Mammary epithelial cell (primary cell): ENCODE measurements at regions of chr3 and their contacts with region 1.

Region 1: GRCh38 chr3:135965506-135966270 is at the start of gene PPP2R3A:
- DNase-seq: peak; percentile 86
- H3K4me3 ChIP-seq: peak within 1 kb of the TSS; percentile 71 to 91 (median 80)
- H3K27ac ChIP-seq: peak within 1 kb of the TSS; percentile 76
- H3K4me1 ChIP-seq: peaks cover 32% of the 10 kb centered on the region
- H3K27me3 ChIP-seq: no peaks in the 10 kb centered on the region
- CTCF ChIP-seq: no peak
- total RNA-seq, gene PPP2R3A: 16.4 to 20.0 TPM

Region 2: GRCh38 chr3:135918580-135918962 is 47.1 kb before region 1 on chr3:
- CTCF ChIA-PET with region 1: no interaction called
- dilution Hi-C with region 1: loop called (anchors 5 kb)
- in situ Hi-C with region 1: no loop called
- intact Hi-C with region 1: no loop called
- DNase-seq: peak; percentile 31
- H3K4me3 ChIP-seq: no peak overlapping the region
- H3K27ac ChIP-seq: no peak overlapping the region
- H3K4me1 ChIP-seq: peaks cover 22% of the 10 kb centered on the region
- H3K27me3 ChIP-seq: no peaks in the 10 kb centered on the region
- CTCF ChIP-seq: peak; percentile 52 to 55

Region 3: DNA sequence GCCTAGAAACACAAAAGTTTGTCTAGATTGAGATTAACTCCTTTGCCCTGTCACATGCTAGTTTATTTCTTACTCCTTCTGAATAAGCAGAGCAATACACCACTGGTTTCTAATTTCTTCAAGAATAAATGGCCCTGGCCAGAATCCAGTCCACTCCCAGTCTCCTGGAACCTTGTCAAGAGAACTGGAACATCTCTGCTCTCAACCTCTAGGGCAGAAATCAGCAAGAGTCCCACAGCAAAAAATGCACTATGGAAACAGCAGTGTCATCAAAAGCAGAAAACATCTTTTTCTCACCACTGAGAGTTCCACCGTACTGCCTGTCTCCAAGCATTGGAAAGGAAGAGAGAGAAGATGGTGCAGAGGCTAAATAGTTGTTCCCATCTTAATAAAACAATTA is 36.0 kb before region 1 on chr3:
- CTCF ChIA-PET with region 1: no interaction called
- dilution Hi-C with region 1: loop called (anchors 5 kb)
- in situ Hi-C with region 1: no loop called
- intact Hi-C with region 1: loop called (anchors 5 kb)
- DNase-seq: peak; percentile 50
- H3K4me3 ChIP-seq: no peak overlapping the region
- H3K27ac ChIP-seq: no peak overlapping the region
- H3K4me1 ChIP-seq: peaks cover 22% of the 10 kb centered on the region
- H3K27me3 ChIP-seq: no peaks in the 10 kb centered on the region
- CTCF ChIP-seq: peak in 1 of 2 donors; percentile 15

Region 4: GRCh38 chr3:135992072-135992471 is 26.4 kb after region 1 on chr3:
- CTCF ChIA-PET with region 1: no interaction called
- dilution Hi-C with region 1: no loop called
- in situ Hi-C with region 1: no loop called
- intact Hi-C with region 1: loop called (anchors 2 kb)
- DNase-seq: peak; percentile 80
- H3K4me3 ChIP-seq: no peak overlapping the region
- H3K27ac ChIP-seq: peak overlapping the region; percentile 72
- H3K4me1 ChIP-seq: peaks cover 26% of the 10 kb centered on the region
- H3K27me3 ChIP-seq: no peaks in the 10 kb centered on the region
- CTCF ChIP-seq: no peak

Region 5: DNA sequence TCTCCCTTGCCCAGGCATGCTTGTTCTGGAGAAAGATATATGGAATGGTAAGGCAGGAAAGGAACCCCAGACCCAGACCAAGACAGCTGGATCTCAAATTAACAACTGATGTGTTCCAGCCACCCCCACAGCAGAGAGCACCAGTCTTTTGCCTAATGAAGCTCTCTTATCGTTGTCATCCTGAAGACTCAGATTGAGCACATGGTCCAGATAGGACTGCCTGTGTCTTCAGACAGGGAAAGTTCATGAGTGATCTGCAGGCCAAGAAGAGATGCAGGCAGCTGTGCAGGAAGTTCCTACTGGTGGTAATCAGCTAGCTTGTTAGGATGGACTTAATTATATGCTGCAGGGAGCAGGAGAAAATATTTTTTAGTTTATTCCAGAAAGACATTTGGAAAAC is 53.2 kb after region 1 on chr3:
- CTCF ChIA-PET with region 1: no interaction called
- dilution Hi-C with region 1: loop called (anchors 5 kb)
- in situ Hi-C with region 1: no loop called
- intact Hi-C with region 1: loop called (anchors 5 kb)
- DNase-seq: no peak
- H3K4me3 ChIP-seq: no peak overlapping the region
- H3K27ac ChIP-seq: no peak overlapping the region
- H3K4me1 ChIP-seq: peaks cover 28% of the 10 kb centered on the region
- H3K27me3 ChIP-seq: no peaks in the 10 kb centered on the region
- CTCF ChIP-seq: no peak